Activated CD8-positive, alpha-beta memory T cell treated with anti-CD3 and anti-CD28 coated beads, Interleukin-2, amount 10 ng/mL, durations not matched to agents 7 days and 5 days (primary cell): ENCODE measurements at regions of chr15 and their contacts with region 1.

Region 1: GRCh38 chr15:55649054-55649423 is 60.9 kb upstream of the PYGO1 start:
- DNase-seq: no peak
- ATAC-seq: no peak
- H3K4me3 Mint-ChIP-seq: no peak overlapping the region
- H3K27ac Mint-ChIP-seq: no peak overlapping the region
- H3K4me1 Mint-ChIP-seq: no peaks in the 10 kb centered on the region
- H3K27me3 Mint-ChIP-seq: no peaks in the 10 kb centered on the region

Region 2: GRCh38 chr15:55334997-55335396 is 314.0 kb before region 1 on chr15:
- CTCF ChIA-PET with region 1: no interaction called
- DNase-seq: no peak
- ATAC-seq: no peak
- H3K4me3 Mint-ChIP-seq: no peak overlapping the region
- H3K27ac Mint-ChIP-seq: no peak overlapping the region
- H3K4me1 Mint-ChIP-seq: no peaks in the 10 kb centered on the region
- H3K27me3 Mint-ChIP-seq: no peaks in the 10 kb centered on the region

Region 3: GRCh38 chr15:55599439-55599838 is 49.6 kb before region 1 on chr15:
- CTCF ChIA-PET with region 1: no interaction called
- DNase-seq: no peak
- ATAC-seq: no peak
- H3K4me3 Mint-ChIP-seq: no peak overlapping the region
- H3K27ac Mint-ChIP-seq: no peak overlapping the region
- H3K4me1 Mint-ChIP-seq: no peaks in the 10 kb centered on the region
- H3K27me3 Mint-ChIP-seq: peaks cover 9% of the 10 kb centered on the region

Region 4: DNA sequence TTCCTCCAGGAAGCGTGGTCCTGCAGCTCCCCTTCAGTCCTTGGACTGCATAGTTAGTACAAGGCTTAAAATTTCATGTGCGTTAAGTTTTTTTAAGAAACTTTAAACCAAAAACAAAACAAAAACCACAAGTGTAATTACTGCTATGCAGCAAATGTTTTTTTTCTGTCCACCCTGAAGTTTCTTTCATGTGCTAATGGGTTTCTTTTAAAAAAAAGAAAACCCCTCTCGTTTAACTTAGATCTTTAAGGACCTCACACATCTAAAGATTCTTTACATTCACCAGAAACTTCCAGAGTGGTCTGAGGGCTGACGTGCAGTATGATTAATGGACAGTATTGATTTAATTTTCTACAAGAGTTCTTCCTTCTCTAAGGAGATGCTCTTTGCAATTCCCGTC is 11.1 kb after region 1 on chr15:
- CTCF ChIA-PET with region 1: interaction called, 10 read pairs
- DNase-seq: no peak
- ATAC-seq: no peak
- H3K4me3 Mint-ChIP-seq: no peak overlapping the region
- H3K27ac Mint-ChIP-seq: no peak overlapping the region
- H3K4me1 Mint-ChIP-seq: peaks cover 18% of the 10 kb centered on the region
- H3K27me3 Mint-ChIP-seq: no peaks in the 10 kb centered on the region

Region 5: GRCh38 chr15:55846116-55846707 is 197.2 kb after region 1 on chr15:
- CTCF ChIA-PET with region 1: interaction called, 32 read pairs
- DNase-seq: peak; percentile 55
- ATAC-seq: peak; percentile 57
- H3K4me3 Mint-ChIP-seq: no peak overlapping the region
- H3K27ac Mint-ChIP-seq: no peak overlapping the region
- H3K4me1 Mint-ChIP-seq: peaks cover 2% of the 10 kb centered on the region
- H3K27me3 Mint-ChIP-seq: no peaks in the 10 kb centered on the region